ENCODE measurements at regions of chr10 and their contacts with region 1.

Region 1: GRCh38 chr10:71812016-71812912 is 38.8 kb downstream of the PSAP start:
- DNase-seq: peak; percentile 46
- H3K4me3 ChIP-seq: no peak overlapping the region
- H3K27ac ChIP-seq: no peak overlapping the region
- H3K4me1 ChIP-seq: no peaks in the 10 kb centered on the region
- H3K27me3 ChIP-seq: no peaks in the 10 kb centered on the region
- CTCF ChIP-seq: peak; percentile 89 to 92
- POLR2A ChIP-seq: no peak

Region 2: DNA sequence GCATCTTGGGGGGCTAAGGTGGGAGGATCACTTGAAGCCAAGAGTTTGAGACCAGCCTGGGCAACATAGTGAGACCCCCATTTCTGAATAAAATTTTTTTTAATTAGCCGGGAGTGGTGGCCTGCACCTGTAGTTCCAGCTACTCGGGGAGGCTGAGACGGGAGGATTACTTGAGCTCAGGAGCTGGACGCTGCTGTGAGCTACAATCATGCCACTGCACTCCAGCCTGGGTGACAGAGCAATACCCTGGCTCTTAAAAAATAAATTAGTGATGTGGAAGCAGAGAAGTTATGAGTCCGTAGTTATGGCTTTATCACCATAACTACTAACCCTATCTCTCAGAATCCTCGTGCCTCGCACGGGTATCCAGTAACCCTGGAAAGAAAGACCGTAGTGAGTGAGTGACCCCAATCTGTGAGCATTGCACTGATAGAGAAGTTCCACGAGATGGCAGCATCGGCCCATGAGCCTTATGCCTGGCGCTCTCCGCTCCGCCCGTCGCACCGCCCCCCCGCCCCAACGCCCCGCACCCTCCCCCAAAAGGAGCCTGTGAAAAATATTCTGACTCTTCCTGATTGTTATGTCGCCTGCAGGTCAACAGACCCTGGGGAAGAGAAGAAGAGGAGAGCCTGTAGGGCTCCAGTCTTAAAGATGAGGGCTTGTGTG is 498.1 kb before region 1 on chr10:
- CTCF ChIA-PET with region 1: interaction called, 14 read pairs
- POLR2A ChIA-PET with region 1: interaction called, 5 read pairs
- dilution Hi-C with region 1: no loop called
- intact Hi-C with region 1: loop called (anchors 5 kb)
- DNase-seq: peak; percentile 28
- H3K4me3 ChIP-seq: no peak overlapping the region
- H3K27ac ChIP-seq: no peak overlapping the region
- H3K4me1 ChIP-seq: no peaks in the 10 kb centered on the region
- H3K27me3 ChIP-seq: peaks cover 16 to 20% of the 10 kb centered on the region in 2 experiments
- CTCF ChIP-seq: peak; percentile 40 to 81
- POLR2A ChIP-seq: no peak

Region 3: DNA sequence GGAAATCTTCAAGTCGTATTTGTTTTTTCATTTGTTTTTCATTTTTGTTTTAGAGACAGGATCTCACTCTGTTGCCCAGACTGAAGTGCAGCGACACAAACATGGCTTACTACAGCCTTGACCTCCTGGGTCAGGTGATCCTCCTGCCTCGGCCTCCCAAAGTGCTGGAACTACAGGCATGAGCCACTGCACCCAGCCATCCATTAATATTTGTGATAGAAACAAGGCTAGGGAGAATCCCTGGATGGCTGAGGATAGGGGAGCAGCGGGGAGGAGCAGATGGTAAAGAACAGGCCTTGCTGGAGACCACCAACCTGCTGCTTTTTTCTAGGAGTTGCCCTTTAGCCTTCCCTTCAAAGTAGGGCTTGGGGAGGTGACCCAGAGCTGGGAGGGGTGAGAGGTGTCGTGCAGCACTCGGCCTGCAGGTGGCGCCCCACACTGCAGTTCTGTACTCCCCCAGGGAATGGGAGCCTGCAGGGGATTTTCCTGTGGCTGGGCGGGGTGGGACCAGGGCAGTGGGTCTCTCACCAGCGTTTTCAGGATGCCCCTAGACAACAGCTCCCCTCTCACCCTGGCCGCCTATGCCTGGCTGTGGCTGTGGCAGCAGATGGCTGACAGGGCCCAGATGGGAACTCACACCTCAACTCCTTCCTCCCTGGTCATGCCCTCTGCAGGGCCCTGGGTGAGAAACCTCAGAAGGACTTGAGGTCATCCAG is 428.1 kb before region 1 on chr10:
- CTCF ChIA-PET with region 1: interaction called, 11 read pairs
- POLR2A ChIA-PET with region 1: no interaction called
- dilution Hi-C with region 1: no loop called
- intact Hi-C with region 1: loop called (anchors 1 kb)
- DNase-seq: peak; percentile 42
- H3K4me3 ChIP-seq: no peak overlapping the region
- H3K27ac ChIP-seq: no peak overlapping the region
- H3K4me1 ChIP-seq: no peaks in the 10 kb centered on the region
- H3K27me3 ChIP-seq: peaks cover 6 to 8% of the 10 kb centered on the region in 2 experiments
- CTCF ChIP-seq: peak; percentile 91 to 98
- POLR2A ChIP-seq: no peak

Region 4: GRCh38 chr10:71486484-71487114 is 325.7 kb before region 1 on chr10:
- CTCF ChIA-PET with region 1: interaction called, 6 read pairs
- POLR2A ChIA-PET with region 1: no interaction called
- dilution Hi-C with region 1: no loop called
- intact Hi-C with region 1: loop called (anchors 5 kb)
- DNase-seq: peak; percentile 15
- H3K4me3 ChIP-seq: no peak overlapping the region
- H3K27ac ChIP-seq: no peak overlapping the region
- H3K4me1 ChIP-seq: no peaks in the 10 kb centered on the region
- H3K27me3 ChIP-seq: no peaks in the 10 kb centered on the region
- CTCF ChIP-seq: peak; percentile 66 to 80
- POLR2A ChIP-seq: no peak

Region 5: DNA sequence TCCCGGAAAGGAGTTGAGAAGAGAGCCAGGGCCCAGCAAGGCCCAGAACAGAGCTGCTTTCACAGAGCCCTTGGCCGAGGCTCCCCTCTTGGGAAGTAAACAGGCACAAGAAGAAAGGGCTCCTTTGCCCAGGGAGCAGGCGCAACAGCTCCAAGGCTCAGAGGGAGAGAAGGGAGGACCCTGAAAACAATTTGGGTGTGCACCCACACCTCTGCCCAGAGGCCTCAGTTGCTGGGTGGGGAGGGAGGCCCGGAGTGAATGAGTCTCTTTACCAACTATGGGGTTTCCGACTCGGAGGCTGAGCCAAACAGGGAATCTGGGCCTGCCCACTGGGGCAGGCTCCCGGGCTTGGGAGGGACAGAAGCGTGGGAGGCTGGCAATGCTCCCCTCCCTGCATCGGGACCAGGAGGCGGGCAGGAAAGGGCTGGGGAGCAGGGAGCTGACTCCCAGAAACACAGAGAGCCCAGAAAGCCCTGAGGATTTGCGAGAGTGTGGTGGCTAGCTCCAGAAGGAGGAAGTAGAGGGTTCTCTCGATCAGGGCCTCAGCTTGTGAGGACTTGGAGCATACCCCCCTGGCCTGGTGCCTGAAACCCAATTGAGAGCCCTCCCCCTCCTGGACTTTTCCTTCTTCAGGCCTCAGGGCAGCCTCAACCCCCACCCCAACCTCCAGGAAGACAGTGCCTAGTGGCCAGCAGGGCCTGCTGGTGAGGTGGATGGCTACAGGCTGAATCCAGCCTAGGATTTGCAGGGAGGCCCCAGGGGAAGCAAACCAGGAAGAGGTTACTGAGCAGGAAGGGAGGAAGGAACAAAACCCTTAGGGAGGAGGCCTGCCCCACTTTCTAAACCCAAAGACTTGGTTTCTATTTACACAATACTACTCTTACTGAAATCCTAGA is 98.9 kb before region 1 on chr10:
- CTCF ChIA-PET with region 1: interaction called, 32 read pairs
- POLR2A ChIA-PET with region 1: no interaction called
- dilution Hi-C with region 1: no loop called
- intact Hi-C with region 1: loop called (anchors 5 kb)
- DNase-seq: peak; percentile 26
- H3K4me3 ChIP-seq: no peak overlapping the region
- H3K27ac ChIP-seq: no peak overlapping the region
- H3K4me1 ChIP-seq: peaks cover 3% of the 10 kb centered on the region
- H3K27me3 ChIP-seq: peaks cover 0 to 2% of the 10 kb centered on the region in 2 experiments
- CTCF ChIP-seq: peak in 1 of 2 donors; percentile 10
- POLR2A ChIP-seq: no peak

Region 6: GRCh38 chr10:71902351-71902750 is 90.1 kb after region 1 on chr10:
- CTCF ChIA-PET with region 1: no interaction called
- POLR2A ChIA-PET with region 1: no interaction called
- dilution Hi-C with region 1: no loop called
- intact Hi-C with region 1: no loop called
- DNase-seq: no peak
- H3K4me3 ChIP-seq: no peak overlapping the region
- H3K27ac ChIP-seq: no peak overlapping the region
- H3K4me1 ChIP-seq: peaks cover 4% of the 10 kb centered on the region
- H3K27me3 ChIP-seq: no peaks in the 10 kb centered on the region
- CTCF ChIP-seq: no peak
- POLR2A ChIP-seq: no peak

Region 7: GRCh38 chr10:71999360-72000072 is 187.3 kb after region 1 on chr10:
- CTCF ChIA-PET with region 1: no interaction called
- POLR2A ChIA-PET with region 1: no interaction called
- dilution Hi-C with region 1: no loop called
- intact Hi-C with region 1: no loop called
- DNase-seq: peak; percentile 55
- H3K4me3 ChIP-seq: no peak overlapping the region
- H3K27ac ChIP-seq: no peak overlapping the region
- H3K4me1 ChIP-seq: peaks cover 12% of the 10 kb centered on the region
- H3K27me3 ChIP-seq: no peaks in the 10 kb centered on the region
- CTCF ChIP-seq: no peak
- POLR2A ChIP-seq: no peak

Measured in endothelial cell of umbilical vein (primary cell).